ENCODE measurements at regions of chr19 and their contacts with region 1.

Region 1: DNA sequence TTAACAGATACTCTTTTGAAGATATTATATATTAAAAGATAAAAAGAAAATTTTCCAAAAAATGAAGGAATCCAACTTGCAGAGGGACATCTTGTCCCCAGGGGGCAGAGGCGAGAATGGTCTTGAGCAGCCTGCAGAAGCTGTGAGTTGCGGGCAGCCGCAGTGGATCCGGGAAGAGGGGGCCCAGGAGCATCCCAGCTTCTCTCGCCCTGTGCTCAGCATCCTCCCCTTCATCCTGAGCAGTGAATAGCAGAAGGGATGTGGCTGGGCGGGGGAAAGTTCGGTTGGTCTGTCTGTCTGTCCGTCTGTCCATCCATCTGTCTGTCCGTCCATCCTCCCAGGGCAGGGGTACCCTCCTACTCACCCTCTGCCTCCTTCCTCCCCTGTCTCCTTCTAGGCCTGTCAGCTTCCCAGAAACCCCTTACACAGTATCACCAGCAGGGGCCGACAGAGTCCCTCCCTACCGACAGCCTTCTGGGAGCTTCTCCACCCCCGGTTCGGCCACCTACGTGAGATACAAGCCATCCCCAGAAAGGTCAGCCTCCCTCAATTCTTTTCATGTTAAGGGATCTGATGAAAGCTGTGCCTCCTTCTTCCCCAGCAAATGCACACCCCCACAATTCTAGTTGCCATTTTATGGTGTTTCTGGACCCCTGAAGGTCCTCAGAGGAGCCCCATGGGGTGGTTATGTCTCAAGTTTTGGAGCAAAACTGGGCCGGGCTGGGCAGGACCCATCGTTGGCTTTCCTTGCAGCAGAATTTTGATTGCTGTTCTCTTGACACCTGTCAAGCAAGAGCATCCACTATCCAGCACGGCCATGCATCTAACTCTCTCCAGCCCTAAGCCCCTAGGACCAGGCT is 81.6 kb downstream of the DPF1 start:
- DNase-seq: no peak
- H3K4me3 ChIP-seq: no peak overlapping the region
- H3K27ac ChIP-seq: peak overlapping the region; percentile 2
- H3K27me3 ChIP-seq: no peaks in the 10 kb centered on the region
- CTCF ChIP-seq: peak; percentile 87

Region 2: DNA sequence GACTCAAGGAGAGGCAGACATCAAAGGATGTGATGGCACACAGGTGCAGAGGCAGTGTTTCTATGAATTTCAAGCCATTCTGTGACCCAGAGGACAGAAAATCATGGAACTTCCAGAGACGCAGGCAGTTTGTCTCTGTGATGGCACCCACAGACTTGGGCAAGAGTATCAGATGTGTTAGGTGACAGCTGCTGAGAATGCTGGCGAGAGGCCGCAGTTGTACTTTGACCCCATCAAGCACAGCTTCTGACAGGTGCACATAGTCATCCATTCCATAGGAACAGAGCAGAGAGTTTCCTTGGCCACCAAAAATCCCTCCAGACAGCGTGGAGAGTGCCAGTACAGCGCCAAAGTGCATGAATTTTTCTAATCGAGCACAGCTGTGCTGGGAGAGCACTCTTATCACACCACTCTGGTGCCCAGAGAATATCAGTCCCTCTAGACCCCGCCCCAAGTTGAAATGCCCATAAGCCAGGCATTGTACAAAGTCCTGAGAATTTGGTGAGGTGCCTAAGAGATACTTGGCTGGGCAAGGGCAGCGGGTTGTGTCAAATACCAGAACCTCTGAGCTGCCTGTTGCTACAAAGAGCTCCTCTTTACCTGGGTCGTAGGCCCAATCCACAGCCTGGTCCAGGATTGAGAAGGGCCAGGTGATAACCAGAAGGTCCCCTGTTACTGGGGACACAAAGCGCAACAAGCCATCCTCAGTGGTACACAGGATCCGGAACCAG is 248.4 kb before region 1 on chr19:
- CTCF ChIA-PET with region 1: interaction called, 10 read pairs
- POLR2A ChIA-PET with region 1: no interaction called
- DNase-seq: no peak
- H3K4me3 ChIP-seq: no peak overlapping the region
- H3K27ac ChIP-seq: no peak overlapping the region
- H3K27me3 ChIP-seq: peaks cover 25% of the 10 kb centered on the region
- CTCF ChIP-seq: no peak

Region 3: DNA sequence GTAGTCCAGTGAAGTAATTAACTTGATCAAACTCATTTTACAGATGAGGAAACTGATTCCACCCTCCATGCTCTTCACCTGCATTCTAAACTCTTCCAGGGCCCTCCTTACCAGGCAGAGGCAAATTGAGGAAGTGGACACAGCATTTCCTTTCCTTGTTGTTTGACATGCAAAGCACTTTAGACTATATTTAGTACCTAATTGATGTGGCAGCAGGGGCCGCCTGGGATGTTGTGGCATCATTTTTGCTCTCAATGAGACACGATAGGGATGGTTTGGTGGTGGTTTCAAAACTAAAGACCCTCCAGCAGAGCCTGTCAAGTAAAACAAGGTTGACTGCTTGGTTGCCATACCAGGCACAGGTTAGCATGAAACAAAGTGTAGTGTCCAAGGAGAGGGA is 227.5 kb before region 1 on chr19:
- CTCF ChIA-PET with region 1: interaction called, 10 read pairs
- POLR2A ChIA-PET with region 1: no interaction called
- DNase-seq: no peak
- H3K4me3 ChIP-seq: no peak overlapping the region
- H3K27ac ChIP-seq: no peak overlapping the region
- H3K27me3 ChIP-seq: no peaks in the 10 kb centered on the region
- CTCF ChIP-seq: no peak

Region 4: DNA sequence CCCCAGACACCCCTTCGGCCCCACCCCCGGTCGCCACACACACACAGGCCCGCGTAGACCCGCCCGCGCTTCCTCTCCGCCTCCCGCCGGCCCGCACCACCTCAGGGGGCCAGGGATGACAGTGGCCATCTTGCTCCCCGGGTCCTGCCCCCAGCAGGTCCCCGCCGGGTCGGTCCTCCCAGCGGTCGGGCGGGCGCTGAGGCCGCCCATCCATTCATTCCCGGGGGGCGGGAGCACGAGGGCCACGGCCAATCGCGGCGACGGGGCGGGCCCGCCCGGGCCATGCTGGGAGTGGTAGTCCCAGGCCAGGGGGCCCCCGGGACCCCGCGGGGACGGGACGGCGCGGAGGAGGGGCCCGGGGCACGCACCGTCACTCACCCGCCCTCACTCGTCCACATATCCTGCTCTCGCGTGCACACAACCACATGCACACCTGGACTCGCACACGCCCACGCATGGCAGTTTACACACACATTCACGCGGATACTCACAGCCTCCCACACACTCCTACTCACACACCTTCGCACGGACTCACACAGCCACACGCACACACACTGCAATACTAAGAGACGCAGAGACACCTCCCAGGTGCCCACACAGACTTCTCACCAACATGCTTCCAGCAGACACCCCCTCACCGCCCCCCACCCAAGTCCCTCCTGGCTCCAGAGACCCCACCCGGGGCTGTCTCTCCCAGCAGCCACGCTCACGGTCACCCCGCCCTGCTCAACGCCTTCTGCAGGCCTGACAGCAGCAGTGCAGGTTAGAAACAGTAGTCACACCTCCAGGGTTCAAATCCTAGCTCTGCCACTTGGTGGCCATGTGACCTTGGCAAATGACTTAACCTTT is 81.8 kb after region 1 on chr19 and contains the start of gene DPF1:
- CTCF ChIA-PET with region 1: no interaction called
- POLR2A ChIA-PET with region 1: no interaction called
- DNase-seq: no peak
- H3K4me3 ChIP-seq: peak within 1 kb of the TSS; percentile 67
- H3K27ac ChIP-seq: no peak within 1 kb of the TSS
- H3K27me3 ChIP-seq: no peaks in the 10 kb centered on the region
- CTCF ChIP-seq: 0 out of 2 replicates have a peak, but pooled peaks have one; percentile 9
- polyA plus RNA-seq, gene DPF1: 1.4 and 1.6 TPM in 2 replicates

Region 5: GRCh38 chr19:38395076-38395473 is 252.7 kb after region 1 on chr19:
- CTCF ChIA-PET with region 1: no interaction called
- POLR2A ChIA-PET with region 1: no interaction called
- DNase-seq: no peak
- H3K4me3 ChIP-seq: no peak overlapping the region
- H3K27ac ChIP-seq: no peak overlapping the region
- H3K27me3 ChIP-seq: no peaks in the 10 kb centered on the region
- CTCF ChIP-seq: no peak